Activated T-helper 1 cell treated with anti-CD3 and anti-CD28 coated beads, Interleukin-12 subunit alpha, Interleukin-12 subunit beta, Interleukin-2, Interleukin-4 antibody, amounts not matched to agents 30 ng/mL and 10 ng/mL and 1 ng/mL, durations not matched to agents 14 hours and 24 hours and 36 hours (primary cell): ENCODE measurements at regions of chr6 and their contacts with region 1.

Region 1: GRCh38 chr6:157461000-157461915 is 80.3 kb downstream of the ZDHHC14 start:
- DNase-seq: peak; percentile 75
- H3K4me3 Mint-ChIP-seq: peak overlapping the region; percentile 63
- H3K27ac Mint-ChIP-seq: peak overlapping the region; percentile 95
- H3K4me1 Mint-ChIP-seq: peaks cover 66% of the 10 kb centered on the region
- H3K27me3 Mint-ChIP-seq: no peaks in the 10 kb centered on the region

Region 2: GRCh38 chr6:157323255-157323965 is 137.8 kb before region 1 on chr6 and contains the start of gene TMEM242:
- intact Hi-C with region 1: loop called (anchors 2 kb)
- DNase-seq: peak; percentile 86
- H3K4me3 Mint-ChIP-seq: peak within 1 kb of the TSS; percentile 99
- H3K27ac Mint-ChIP-seq: peak within 1 kb of the TSS; percentile 91
- H3K4me1 Mint-ChIP-seq: peaks cover 49% of the 10 kb centered on the region
- H3K27me3 Mint-ChIP-seq: peaks cover 16% of the 10 kb centered on the region
- total RNA-seq, gene TMEM242: 10.1 and 12.7 TPM in 2 replicates

Region 3: DNA sequence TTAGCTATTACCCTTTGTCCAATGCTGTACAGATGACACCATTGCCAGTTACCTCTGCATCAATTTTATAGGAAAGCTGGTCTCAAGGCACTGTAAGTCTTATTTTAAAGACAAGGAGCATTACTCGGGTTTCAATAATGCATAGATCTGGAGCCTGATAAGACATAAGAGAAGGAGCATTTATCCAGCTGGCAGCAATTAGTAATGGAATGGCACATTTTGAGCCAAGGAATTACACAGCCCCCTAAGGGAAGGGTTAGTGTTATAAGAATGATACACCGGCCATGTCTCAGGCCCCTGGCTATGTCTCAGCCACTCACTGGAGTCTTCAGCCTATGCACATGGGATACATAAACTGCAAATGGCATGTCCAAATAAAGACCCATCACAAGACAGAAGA is 114.9 kb before region 1 on chr6:
- intact Hi-C with region 1: no loop called
- DNase-seq: no peak
- H3K4me3 Mint-ChIP-seq: no peak overlapping the region
- H3K27ac Mint-ChIP-seq: no peak overlapping the region
- H3K4me1 Mint-ChIP-seq: no peaks in the 10 kb centered on the region
- H3K27me3 Mint-ChIP-seq: peaks cover 53% of the 10 kb centered on the region

Region 4: GRCh38 chr6:157428427-157429202 is 32.6 kb before region 1 on chr6:
- intact Hi-C with region 1: loop called (anchors 1 kb)
- DNase-seq: no peak
- H3K4me3 Mint-ChIP-seq: peak overlapping the region; percentile 2
- H3K27ac Mint-ChIP-seq: peak overlapping the region; percentile 77
- H3K4me1 Mint-ChIP-seq: peaks cover 43% of the 10 kb centered on the region
- H3K27me3 Mint-ChIP-seq: peaks cover 3% of the 10 kb centered on the region

Region 5: GRCh38 chr6:157527471-157527907 is 66.2 kb after region 1 on chr6:
- intact Hi-C with region 1: loop called (anchors 2 kb)
- DNase-seq: peak; percentile 56
- H3K4me3 Mint-ChIP-seq: peak overlapping the region; percentile 23
- H3K27ac Mint-ChIP-seq: peak overlapping the region; percentile 64
- H3K4me1 Mint-ChIP-seq: peaks cover 40% of the 10 kb centered on the region
- H3K27me3 Mint-ChIP-seq: peaks cover 6% of the 10 kb centered on the region

Region 6: DNA sequence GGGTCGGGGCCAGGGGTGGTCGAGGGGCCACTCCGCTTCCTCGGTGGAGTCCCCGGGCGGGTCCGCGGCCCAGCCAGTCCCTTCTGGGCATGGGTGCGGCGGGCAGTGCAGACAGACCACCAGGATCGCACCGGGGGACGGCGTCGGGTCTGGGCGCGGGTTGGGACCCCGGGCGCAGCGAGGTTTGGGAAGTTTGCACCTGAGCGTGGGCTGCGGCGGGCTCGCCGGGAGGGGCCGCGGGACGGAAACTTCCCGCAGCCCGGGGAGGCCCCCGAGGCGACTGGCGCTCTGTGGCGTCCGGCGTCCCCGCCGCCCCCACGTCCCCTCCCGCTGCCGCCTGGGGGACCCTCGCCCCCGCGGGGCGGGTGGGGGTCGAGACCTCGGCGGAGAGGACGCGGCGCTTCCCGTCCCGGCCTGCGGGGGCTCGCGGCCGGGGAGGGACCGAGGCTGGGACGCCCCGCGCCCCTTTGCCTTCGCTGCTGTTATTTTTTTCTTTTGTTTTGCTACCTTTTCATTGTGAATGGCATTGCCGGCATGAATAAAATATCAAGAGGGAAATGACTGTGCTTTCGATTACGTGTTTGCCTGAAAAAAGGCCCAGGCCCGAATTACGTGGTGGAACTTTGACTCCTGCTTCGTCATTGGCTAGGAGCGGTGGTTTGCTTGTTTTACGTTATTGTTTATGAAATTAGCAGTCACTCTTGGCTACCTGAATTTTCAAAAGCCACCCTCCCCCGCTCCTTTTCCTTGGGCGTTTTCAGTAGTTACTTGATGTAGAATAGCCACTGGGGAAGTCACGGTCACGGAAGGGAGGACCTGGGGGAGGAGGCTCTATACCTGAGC is 362.5 kb after region 1 on chr6:
- intact Hi-C with region 1: loop called (anchors 1 kb)
- DNase-seq: peak; percentile 72
- H3K4me3 Mint-ChIP-seq: peak overlapping the region; percentile 93
- H3K27ac Mint-ChIP-seq: peak overlapping the region; percentile 97
- H3K4me1 Mint-ChIP-seq: peaks cover 47% of the 10 kb centered on the region
- H3K27me3 Mint-ChIP-seq: peaks cover 34% of the 10 kb centered on the region

Region 7: GRCh38 chr6:157845493-157846259 is 384.4 kb after region 1 on chr6:
- intact Hi-C with region 1: no loop called
- DNase-seq: no peak
- H3K4me3 Mint-ChIP-seq: no peak overlapping the region
- H3K27ac Mint-ChIP-seq: no peak overlapping the region
- H3K4me1 Mint-ChIP-seq: peaks cover 57% of the 10 kb centered on the region
- H3K27me3 Mint-ChIP-seq: no peaks in the 10 kb centered on the region